ENCODE measurements at regions of chr14 and their contacts with region 1.

Region 1: GRCh38 chr14:54691525-54692283 is 124.8 kb downstream of the SAMD4A start:
- DNase-seq: peak; percentile 82 to 94 (median 89)
- H3K4me3 ChIP-seq: no peak overlapping the region
- H3K27ac ChIP-seq: peak overlapping the region in 1 of 5 donors; percentile 8
- H3K4me1 ChIP-seq: peaks cover 14 to 17% of the 10 kb centered on the region in 2 donors
- H3K27me3 ChIP-seq: no peaks in the 10 kb centered on the region
- CTCF ChIP-seq: peak; percentile 85 to 94 (median 92)
- POLR2A ChIP-seq: no peak

Region 2: GRCh38 chr14:54435500-54435981 is 256.2 kb before region 1 on chr14:
- intact Hi-C with region 1: no loop called
- DNase-seq: peak in 1 of 7 donors; percentile 6
- H3K4me3 ChIP-seq: peak overlapping the region in 1 of 4 donors; percentile 5
- H3K27ac ChIP-seq: peak overlapping the region in 2 of 5 donors; percentile 1 to 56
- H3K4me1 ChIP-seq: peaks cover 9 to 40% of the 10 kb centered on the region in 2 donors
- H3K27me3 ChIP-seq: no peaks in the 10 kb centered on the region
- CTCF ChIP-seq: no peak
- POLR2A ChIP-seq: no peak

Region 3: DNA sequence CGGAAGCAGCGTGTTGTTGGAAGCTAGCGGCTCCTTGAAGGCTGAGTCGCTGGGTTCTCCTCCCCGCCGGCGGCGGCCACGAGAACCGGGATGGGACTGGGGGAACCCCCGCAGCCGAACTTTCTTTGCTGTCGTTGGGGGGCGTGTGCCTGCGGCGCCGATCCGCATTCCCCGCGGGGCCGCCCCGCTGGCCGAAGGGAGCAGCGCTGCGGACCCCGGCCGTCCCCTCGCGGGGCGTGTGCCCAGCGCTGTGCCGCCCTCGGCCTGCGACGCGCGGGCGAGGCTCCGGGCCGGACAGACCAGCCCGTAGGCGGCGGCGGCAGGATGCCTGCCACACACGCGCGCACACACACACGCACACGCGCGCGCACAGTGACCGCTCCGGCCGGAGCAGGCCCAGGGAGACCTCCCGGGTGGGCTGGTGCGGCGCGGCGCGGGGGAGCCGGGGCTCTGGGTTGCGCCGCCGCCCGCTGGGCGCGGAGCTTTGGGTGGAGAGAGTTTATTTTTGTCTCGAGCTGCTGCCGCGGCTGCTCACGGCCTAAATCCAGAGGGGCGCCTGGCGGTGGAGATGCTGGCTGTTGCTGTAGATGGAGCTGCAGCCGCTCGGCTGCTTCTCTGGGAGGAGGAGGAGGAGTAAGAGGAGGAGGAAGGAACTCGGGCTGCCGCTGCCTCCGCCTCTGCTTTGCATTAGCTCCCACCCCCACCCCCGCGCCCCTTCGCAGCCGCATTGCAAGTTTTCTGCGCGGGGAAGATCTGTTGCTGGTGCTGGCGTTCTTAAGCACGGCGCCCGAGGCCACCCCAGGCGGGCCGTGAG is 125.1 kb before region 1 on chr14 and contains the start of gene SAMD4A:
- intact Hi-C with region 1: loop called (anchors 5 kb)
- DNase-seq: peak; percentile 74 to 90 (median 81)
- H3K4me3 ChIP-seq: peak within 1 kb of the TSS; percentile 27 to 67 (median 58)
- H3K27ac ChIP-seq: peak within 1 kb of the TSS; percentile 96 to 99 (median 98)
- H3K4me1 ChIP-seq: peaks cover 0 to 23% of the 10 kb centered on the region in 2 donors
- H3K27me3 ChIP-seq: no peaks in the 10 kb centered on the region
- CTCF ChIP-seq: peak in 5 of 6 experiments; percentile 25 to 40 (median 38)
- POLR2A ChIP-seq: peak; percentile 67 to 70
- total RNA-seq, gene SAMD4A: 3.1 to 13.2 (median 10.2) TPM

Region 4: DNA sequence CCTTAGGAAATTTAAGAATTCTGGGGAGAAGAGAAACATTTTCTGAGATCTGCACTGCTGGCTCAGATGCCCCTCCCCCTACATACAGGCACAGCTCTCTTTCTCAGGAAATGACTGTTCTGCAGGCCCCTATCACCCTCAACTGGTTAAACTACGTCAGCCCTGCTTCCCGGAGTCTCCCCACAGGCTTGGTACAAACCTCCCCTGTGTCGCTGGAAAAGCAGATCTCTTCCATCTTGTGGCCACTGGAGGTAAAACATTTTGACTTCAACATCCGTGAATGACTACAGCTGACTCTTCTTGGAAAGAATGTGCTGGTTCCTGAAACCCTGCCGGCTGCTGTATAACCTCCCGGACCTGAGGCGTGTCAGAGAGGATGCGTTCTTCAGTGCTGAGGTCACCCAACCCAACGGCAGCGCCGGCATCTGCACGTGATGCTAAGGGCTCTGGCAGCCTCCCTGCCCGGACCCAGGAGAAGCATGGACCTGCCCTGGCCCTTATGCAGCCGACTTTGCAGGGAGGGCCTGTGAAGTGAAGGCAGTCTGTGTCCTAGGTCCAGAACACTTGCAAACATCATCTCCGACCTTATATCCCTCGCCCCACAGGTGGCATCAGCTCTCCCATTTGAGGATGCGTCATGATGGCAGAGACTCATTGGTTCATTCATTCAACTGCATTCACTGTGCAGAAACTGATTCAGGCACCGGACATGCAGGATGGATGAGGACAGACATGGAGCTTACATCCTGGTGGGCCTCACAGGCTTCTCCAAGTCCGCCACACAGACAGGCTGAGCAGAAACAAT is 81.7 kb after region 1 on chr14:
- intact Hi-C with region 1: loop called (anchors 5 to 10 kb)
- DNase-seq: peak; percentile 75 to 95 (median 92)
- H3K4me3 ChIP-seq: no peak overlapping the region
- H3K27ac ChIP-seq: peak overlapping the region; percentile 49 to 89 (median 65)
- H3K4me1 ChIP-seq: peaks cover 0 to 20% of the 10 kb centered on the region in 2 donors
- H3K27me3 ChIP-seq: no peaks in the 10 kb centered on the region
- CTCF ChIP-seq: peak; percentile 51 to 90 (median 87)
- POLR2A ChIP-seq: peak in 1 of 2 donors; percentile 42

Measured in adrenal gland (tissue), 19 donors.